Activated CD4-positive, alpha-beta T cell treated with anti-CD3 and anti-CD28 coated beads, Interleukin-2, amount 10 ng/mL, durations not matched to agents 7 days and 5 days (primary cell): ENCODE measurements at regions of chr5 and their contacts with region 1.

Region 1: DNA sequence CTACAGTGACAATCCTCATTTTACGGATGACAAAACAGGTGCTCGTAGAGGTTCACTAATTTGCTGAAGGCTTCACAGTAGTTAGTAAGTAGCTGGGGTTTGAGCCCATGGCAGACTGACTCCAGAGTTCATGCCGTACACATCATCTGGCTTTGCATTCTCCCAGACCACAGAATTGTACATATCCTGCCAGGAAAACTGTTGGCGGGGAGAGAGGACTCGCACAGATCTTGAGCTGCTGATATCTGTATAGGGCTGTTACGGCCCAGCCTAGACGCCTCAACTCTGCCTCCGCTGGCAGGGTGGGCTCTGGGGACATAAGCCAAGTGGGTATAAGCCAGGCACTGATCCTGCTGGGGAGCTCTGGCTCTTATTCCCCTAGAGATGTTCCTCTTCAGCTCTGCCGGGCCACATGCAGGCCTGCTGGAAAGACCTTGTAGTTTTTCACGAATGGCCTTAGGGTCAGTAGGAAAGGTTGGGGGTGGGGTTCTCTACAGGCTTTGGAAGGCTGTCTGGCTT is 16.3 kb downstream of the LARP1 start:
- DNase-seq: no peak
- H3K4me3 Mint-ChIP-seq: no peak overlapping the region
- H3K27ac Mint-ChIP-seq: peak overlapping the region; percentile 33
- H3K4me1 Mint-ChIP-seq: peaks cover 61% of the 10 kb centered on the region
- H3K27me3 Mint-ChIP-seq: no peaks in the 10 kb centered on the region

Region 2: GRCh38 chr5:154758977-154759376 is 12.5 kb before region 1 on chr5:
- CTCF ChIA-PET with region 1: interaction called, 5 read pairs
- POLR2A ChIA-PET with region 1: interaction called, 10 read pairs
- DNase-seq: no peak
- H3K4me3 Mint-ChIP-seq: peak overlapping the region; percentile 69
- H3K27ac Mint-ChIP-seq: peak overlapping the region; percentile 37
- H3K4me1 Mint-ChIP-seq: peaks cover 64% of the 10 kb centered on the region
- H3K27me3 Mint-ChIP-seq: no peaks in the 10 kb centered on the region

Region 3: GRCh38 chr5:154782812-154783592 is 11.6 kb after region 1 on chr5:
- CTCF ChIA-PET with region 1: interaction called, 14 read pairs
- POLR2A ChIA-PET with region 1: no interaction called
- DNase-seq: no peak
- H3K4me3 Mint-ChIP-seq: no peak overlapping the region
- H3K27ac Mint-ChIP-seq: no peak overlapping the region
- H3K4me1 Mint-ChIP-seq: peaks cover 65% of the 10 kb centered on the region
- H3K27me3 Mint-ChIP-seq: no peaks in the 10 kb centered on the region